Dorsolateral prefrontal cortex (tissue), 120 donors: ENCODE measurements at regions of chr14 and their contacts with region 1.

Region 1: GRCh38 chr14:104820669-104821228 is 19.8 kb downstream of the ZBTB42 start:
- DNase-seq: peak in 5 of 10 donors; percentile 62 to 76 (median 71)
- H3K4me3 ChIP-seq: peak overlapping the region in 2 of 59 donors; percentile 20 to 21
- H3K27ac ChIP-seq: peak overlapping the region in 18 of 59 donors; percentile 5 to 64 (median 31)
- H3K27me3 ChIP-seq: no peaks in the 10 kb centered on the region
- CTCF ChIP-seq: peak in 51 of 56 donors; percentile 12 to 58 (median 39)

Region 2: DNA sequence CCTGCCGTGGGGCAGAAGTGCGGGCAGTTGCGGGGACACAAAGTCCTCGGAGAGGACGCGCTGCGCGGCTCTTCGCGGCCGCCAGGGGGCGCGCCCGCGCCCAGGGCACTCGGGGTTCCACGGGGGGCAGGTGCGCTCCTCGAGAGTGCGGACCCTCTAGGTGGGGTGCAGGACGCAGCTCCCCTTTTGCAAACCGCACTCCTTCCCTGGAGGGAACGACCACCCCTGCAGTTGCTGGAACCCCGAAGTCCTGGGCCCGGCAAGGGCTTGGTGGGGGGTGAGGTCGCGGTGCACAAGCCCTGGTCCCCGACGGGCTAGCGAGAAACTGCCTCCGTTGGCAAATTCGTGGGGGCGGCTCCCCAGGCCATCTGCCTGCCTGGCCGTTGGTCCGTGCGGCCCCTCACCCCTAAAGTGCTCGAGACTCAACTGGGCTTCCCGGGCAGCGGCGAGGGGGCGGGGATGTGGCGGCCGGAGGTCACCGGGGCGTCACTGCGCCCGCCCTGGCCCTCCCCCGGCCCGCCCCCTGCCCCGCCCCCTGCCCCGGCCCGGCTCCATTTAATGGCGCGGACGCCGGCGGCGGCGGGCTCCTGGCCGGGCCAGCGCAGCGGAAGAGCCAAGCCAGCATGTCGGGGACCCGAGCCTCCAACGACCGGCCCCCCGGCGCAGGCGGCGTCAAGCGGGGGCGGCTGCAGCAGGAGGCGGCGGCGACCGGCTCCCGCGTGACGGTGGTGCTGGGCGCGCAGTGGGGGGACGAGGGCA is 96.9 kb before region 1 on chr14 and contains the start of gene ADSS1:
- intact Hi-C with region 1: no loop called
- DNase-seq: peak in 4 of 10 donors; percentile 53 to 67 (median 57)
- H3K4me3 ChIP-seq: peak within 1 kb of the TSS; percentile 45 to 82 (median 68)
- H3K27ac ChIP-seq: peak within 1 kb of the TSS in 52 of 59 donors; percentile 1 to 86 (median 66)
- H3K27me3 ChIP-seq: no peaks in the 10 kb centered on the region
- CTCF ChIP-seq: peak; percentile 42 to 94 (median 80)
- total RNA-seq, gene ADSS1: 4.2 to 28.9 (median 10.3) TPM

Region 3: DNA sequence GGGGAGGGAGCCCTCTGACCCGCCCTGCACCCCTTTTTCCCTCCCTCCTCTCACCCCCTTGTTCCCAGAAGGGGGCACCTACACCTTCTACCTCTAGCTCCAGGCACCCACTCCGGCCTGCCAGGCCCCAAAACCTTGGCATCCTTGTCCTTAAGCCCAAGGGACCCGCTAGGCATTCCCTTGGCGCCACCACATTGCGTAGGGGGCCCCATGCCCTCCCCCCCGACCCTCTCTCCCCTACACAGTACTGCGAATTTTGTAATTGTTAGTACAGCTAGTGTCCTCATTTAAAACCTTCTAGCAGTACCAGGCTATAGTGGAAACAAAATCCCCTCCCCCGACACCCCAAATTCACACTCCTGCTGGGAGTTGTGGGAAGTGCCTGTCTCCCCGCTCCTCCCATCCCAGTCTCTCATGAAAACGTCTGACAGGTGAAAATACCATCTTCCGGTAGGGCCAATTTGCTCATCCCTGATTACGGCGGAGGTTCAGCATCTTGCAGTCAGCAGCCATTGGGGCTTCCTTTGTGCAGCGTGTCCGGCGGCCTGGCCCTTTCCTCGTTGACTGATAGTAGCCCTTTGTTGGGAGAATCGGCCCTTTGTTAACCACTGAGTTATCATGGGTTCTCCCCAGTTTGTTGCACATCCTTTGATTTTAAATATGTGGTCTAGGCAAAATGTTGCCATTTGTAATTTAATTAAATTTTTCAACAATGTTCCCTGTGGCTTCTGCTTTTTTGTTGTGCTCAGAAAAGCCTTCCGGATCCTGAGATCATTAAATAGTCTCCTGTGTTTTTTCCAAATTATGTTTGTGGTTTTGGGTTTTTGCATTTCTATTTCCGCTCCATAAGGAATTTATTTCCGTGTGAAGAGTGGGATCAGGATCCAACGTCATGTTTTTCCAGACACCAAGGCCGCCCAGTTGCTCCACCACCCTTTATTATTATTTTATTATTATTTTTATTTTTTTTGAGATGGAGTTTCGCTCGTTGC is 36.4 kb after region 1 on chr14:
- intact Hi-C with region 1: loop called in 1 of 2 experiments (anchors 5 kb)
- DNase-seq: peak in 6 of 10 donors; percentile 50 to 74 (median 66)
- H3K4me3 ChIP-seq: peak overlapping the region in 16 of 59 donors; percentile 11 to 50 (median 30)
- H3K27ac ChIP-seq: peak overlapping the region in 39 of 59 donors; percentile 1 to 86 (median 59)
- H3K27me3 ChIP-seq: peaks cover 0 to 2% (median 0%) of the 10 kb centered on the region in 45 donors
- CTCF ChIP-seq: peak in 3 of 56 donors; percentile 11 to 29 (median 28)

Region 4: DNA sequence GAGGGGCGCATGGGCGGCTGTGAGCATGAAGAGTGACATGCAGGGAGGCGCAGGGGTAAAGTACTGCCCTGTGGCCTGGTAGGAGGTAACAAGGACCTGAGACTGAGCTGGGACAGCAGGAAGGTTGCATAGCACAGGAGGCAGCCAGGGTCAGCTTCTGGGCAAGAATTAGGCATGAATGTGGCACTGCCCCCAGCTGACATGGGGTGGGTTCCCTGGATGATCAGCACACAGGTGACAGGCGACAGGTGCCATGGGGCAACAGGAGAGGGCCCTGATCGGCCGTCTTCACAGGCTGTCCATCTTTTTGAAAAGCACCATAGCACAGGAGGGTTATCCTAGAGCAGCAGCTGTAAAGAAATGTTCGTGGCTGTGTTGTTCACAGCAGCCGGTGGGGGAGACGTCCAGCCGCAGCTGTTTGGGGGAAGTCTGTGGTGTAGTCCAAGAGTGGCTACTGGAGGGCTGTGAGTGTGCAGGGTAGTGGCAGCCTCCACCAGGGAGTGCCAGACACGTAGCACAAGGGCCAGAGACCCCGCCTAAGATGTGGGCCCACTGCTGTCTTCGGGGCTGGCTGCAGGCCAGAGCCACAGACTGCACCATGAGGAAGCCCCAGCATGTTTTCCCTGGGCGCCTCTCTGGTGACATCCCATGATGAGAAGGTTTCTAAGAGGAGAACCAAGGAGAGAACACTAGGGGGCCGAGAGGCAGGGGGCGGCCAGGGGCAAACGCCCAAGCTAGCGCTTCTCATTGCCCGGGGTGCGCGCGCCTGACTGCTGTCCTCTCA is 173.3 kb after region 1 on chr14:
- intact Hi-C with region 1: no loop called
- DNase-seq: no peak
- H3K4me3 ChIP-seq: no peak overlapping the region
- H3K27ac ChIP-seq: no peak overlapping the region
- H3K27me3 ChIP-seq: no peaks in the 10 kb centered on the region
- CTCF ChIP-seq: no peak